Mammary epithelial cell (primary cell): ENCODE measurements at regions of chr7 and their contacts with region 1.

Region 1: DNA sequence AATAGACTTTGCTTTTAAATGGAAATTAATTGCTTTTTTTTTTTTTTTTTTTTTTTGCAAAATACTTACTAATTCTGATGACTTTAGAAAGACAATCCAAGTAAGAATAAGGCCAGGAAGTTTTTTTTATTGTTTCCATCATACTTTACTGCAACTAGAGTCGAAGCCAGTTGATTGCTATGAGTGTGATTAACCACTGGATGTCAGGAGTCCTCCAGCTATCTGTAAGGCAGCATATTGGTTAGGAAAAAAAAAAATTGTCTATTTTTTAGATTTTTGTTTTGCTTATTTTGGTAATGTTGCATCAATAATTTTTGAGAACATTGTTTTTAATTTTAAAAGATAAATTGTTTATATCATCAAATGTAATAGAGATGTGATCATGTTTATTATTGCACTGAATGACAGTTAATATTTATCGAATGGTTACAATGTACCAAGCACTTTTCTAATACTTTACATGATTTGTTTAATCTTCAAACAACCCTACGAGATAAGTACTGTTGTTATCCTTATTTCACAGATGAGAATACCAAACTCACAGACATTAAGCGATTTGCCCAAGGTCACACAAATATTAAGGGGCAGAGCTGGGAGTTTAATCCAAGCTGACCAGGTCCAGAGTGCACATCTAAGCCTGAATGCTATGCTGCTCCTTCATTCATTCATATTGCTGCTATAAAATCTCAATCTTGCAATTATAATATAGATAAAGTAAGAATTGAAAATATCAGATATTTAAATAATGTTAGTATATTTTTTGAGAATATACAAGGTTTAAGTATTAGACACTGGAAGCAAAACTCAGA is 19.9 kb upstream of the LMOD2 start:
- DNase-seq: no peak
- H3K4me3 ChIP-seq: no peak overlapping the region
- H3K27ac ChIP-seq: no peak overlapping the region
- H3K4me1 ChIP-seq: peaks cover 17% of the 10 kb centered on the region
- H3K27me3 ChIP-seq: no peaks in the 10 kb centered on the region
- CTCF ChIP-seq: peak; percentile 73 to 74

Region 2: GRCh38 chr7:122858320-122858719 is 777.4 kb before region 1 on chr7:
- CTCF ChIA-PET with region 1: no interaction called
- dilution Hi-C with region 1: no loop called
- in situ Hi-C with region 1: no loop called
- intact Hi-C with region 1: no loop called
- DNase-seq: no peak
- H3K4me3 ChIP-seq: no peak overlapping the region
- H3K27ac ChIP-seq: no peak overlapping the region
- H3K4me1 ChIP-seq: no peaks in the 10 kb centered on the region
- H3K27me3 ChIP-seq: no peaks in the 10 kb centered on the region
- CTCF ChIP-seq: no peak

Region 3: GRCh38 chr7:123580406-123581161 is 55.2 kb before region 1 on chr7:
- CTCF ChIA-PET with region 1: interaction called, 4 read pairs
- dilution Hi-C with region 1: no loop called
- in situ Hi-C with region 1: no loop called
- intact Hi-C with region 1: loop called (anchors 1 kb)
- DNase-seq: peak; percentile 41
- H3K4me3 ChIP-seq: peak overlapping the region in 1 of 3 experiments; percentile 27
- H3K27ac ChIP-seq: no peak overlapping the region
- H3K4me1 ChIP-seq: peaks cover 6% of the 10 kb centered on the region
- H3K27me3 ChIP-seq: no peaks in the 10 kb centered on the region
- CTCF ChIP-seq: peak; percentile 87 to 93

Region 4: GRCh38 chr7:123615344-123615743 is 20.4 kb before region 1 on chr7:
- CTCF ChIA-PET with region 1: no interaction called
- dilution Hi-C with region 1: no loop called
- in situ Hi-C with region 1: no loop called
- intact Hi-C with region 1: no loop called
- DNase-seq: no peak
- H3K4me3 ChIP-seq: no peak overlapping the region
- H3K27ac ChIP-seq: no peak overlapping the region
- H3K4me1 ChIP-seq: no peaks in the 10 kb centered on the region
- H3K27me3 ChIP-seq: no peaks in the 10 kb centered on the region
- CTCF ChIP-seq: no peak

Region 5: DNA sequence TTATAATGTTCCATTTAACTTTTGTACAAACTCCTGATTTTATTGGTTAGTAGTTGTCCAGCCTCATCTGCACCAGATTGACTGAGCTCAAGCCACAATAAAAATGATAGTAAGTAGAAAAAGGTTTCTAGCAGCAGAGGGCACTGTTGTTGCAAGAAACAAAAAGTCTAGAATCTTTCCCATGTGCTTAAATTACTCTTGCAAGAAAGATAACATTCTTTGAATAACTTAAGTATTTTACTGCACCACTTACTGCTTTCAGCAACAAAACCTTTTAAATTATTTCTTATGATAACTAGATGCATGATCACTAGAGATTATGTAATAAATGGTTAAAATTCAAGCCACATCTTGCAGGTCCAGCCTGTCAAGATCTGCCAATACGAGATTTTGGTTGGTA is 46.9 kb after region 1 on chr7:
- CTCF ChIA-PET with region 1: no interaction called
- dilution Hi-C with region 1: no loop called
- in situ Hi-C with region 1: no loop called
- intact Hi-C with region 1: loop called (anchors 2 kb)
- DNase-seq: peak; percentile 32
- H3K4me3 ChIP-seq: no peak overlapping the region
- H3K27ac ChIP-seq: no peak overlapping the region
- H3K4me1 ChIP-seq: no peaks in the 10 kb centered on the region
- H3K27me3 ChIP-seq: no peaks in the 10 kb centered on the region
- CTCF ChIP-seq: peak; percentile 52 to 57

Region 6: GRCh38 chr7:123748734-123749536 is 113.2 kb after region 1 on chr7 and contains the start of gene WASL:
- CTCF ChIA-PET with region 1: no interaction called
- dilution Hi-C with region 1: no loop called
- in situ Hi-C with region 1: no loop called
- intact Hi-C with region 1: loop called (anchors 2 kb)
- DNase-seq: peak; percentile 90
- H3K4me3 ChIP-seq: peak within 1 kb of the TSS; percentile 61 to 98 (median 76)
- H3K27ac ChIP-seq: peak within 1 kb of the TSS; percentile 94
- H3K4me1 ChIP-seq: peaks cover 7% of the 10 kb centered on the region
- H3K27me3 ChIP-seq: no peaks in the 10 kb centered on the region
- CTCF ChIP-seq: peak in 1 of 2 donors; percentile 6
- total RNA-seq, gene WASL: 26.3 to 45.6 TPM

Region 7: DNA sequence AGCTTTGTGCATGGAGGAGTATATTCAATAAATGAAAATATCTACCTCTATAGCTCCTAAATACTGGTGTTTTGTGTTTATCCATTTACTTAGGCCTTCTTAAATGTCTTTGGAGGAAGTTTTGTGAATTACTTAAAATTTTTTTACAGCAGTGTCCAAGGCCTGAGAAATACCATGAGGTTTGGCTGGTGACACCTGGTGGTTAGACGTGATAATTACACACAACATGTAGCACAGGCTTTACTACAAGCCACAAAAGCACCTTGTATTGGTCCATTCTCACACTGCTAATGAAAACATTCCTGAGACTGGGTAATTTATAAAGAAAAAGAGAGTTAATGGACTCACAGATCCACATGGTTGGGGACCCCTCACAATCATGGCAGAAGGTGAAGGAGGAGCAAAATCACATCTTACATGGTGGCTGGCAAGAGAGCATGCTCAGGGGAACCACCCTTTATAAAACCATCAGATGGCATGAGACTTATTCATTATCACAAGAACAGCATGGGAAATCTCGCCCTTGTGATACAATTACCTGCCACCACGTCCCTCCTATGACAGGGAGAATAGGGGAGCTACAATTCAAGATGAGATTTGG is 229.9 kb after region 1 on chr7:
- CTCF ChIA-PET with region 1: no interaction called
- dilution Hi-C with region 1: no loop called
- in situ Hi-C with region 1: loop called (anchors 25 kb)
- intact Hi-C with region 1: loop called (anchors 1 kb)
- DNase-seq: peak; percentile 55
- H3K4me3 ChIP-seq: no peak overlapping the region
- H3K27ac ChIP-seq: no peak overlapping the region
- H3K4me1 ChIP-seq: peaks cover 24% of the 10 kb centered on the region
- H3K27me3 ChIP-seq: no peaks in the 10 kb centered on the region
- CTCF ChIP-seq: peak; percentile 59 to 69